Posterior cingulate gyrus (tissue), 11 donors: ENCODE measurements at regions of chr7 and their contacts with region 1.

Region 1: GRCh38 chr7:2151245-2151644 is 81.5 kb downstream of the MAD1L1 start:
- DNase-seq: peak in 5 of 10 donors; percentile 33 to 92 (median 52)

Region 2: DNA sequence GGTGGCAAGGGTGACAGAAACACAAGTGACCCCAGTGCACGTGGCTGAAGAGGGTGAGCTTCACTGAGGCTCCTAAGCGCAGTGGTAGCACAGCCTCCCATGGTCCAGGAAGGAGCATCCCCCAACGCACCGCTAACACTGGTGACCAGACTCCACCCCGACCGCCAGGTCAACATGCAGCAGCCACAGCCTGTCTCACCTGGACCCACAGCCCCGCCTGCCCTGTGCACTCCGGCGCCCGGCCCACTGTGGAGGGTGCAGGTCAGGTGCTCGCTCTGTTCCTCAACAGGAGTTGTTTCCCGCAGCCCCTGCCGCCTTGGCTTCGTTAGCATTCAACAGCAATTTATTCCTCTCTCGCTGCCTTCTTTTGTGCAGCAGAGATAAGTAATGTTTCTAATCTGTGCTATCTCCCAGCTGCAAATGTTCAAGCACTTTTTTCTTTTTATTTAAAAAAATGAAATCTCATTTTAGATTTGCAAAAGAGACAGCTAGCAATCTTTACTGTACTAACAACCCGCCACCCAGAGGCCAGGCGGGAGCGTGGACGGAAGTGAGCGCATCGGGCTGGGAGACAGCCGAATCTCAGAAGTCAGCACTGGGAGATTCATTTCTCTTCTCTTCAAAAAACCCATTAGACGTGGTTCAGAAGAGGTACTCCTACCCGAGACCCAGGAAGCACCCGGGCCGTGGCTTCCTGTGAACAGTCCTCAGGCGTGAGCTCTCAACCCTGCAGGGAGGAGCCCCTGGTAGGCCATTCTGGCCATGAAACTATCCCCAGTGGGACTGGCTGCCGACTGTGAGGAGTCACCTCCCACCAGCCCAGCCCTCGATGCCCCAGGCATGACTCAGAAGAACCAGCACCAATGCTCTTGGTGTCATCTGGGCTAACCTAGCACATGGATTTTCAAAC is 51.9 kb before region 1 on chr7:
- intact Hi-C with region 1: no loop called
- DNase-seq: peak in 1 of 10 donors; percentile 86

Region 3: DNA sequence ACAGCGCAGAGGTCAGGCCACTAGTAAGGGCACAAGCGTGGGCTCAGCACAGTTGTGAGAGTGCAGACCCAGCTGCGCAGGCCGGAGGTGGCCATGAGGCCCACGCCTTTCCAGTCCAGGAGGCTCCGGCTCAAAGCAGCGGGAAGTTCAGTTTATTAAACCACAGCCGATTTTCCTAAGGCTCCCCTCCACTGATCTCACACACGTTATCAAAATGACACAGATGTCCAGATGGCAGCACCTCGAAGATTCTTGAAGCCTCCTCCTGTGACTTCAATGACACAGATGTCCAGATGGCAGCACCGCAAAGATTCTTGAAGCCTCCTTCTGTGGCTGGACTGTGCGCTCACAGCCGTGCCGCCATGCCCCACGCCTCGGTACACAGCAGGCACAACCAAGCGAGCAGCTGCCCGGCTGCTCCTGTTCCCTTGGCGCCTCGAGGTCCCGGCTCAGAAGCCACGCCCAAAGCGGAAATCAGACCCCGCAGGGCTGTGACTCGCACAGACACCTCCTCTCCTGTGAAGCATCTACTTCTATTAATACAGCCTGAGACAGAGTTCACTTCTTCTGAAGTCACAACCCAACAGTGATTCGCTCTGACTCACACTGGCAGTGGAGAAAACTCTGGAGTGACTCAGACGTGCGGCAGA is 41.2 kb before region 1 on chr7:
- intact Hi-C with region 1: loop called (anchors 5 kb)
- DNase-seq: peak in 1 of 10 donors; percentile 81